ENCODE measurements at regions of chr10 and their contacts with region 1.

Region 1: GRCh38 chr10:133013463-133013862 is 71.1 kb upstream of the CFAP46 start:
- DNase-seq: no peak
- H3K4me3 ChIP-seq: no peak overlapping the region
- H3K27ac ChIP-seq: no peak overlapping the region
- H3K4me1 ChIP-seq: no peaks in the 10 kb centered on the region
- H3K27me3 ChIP-seq: peaks cover 0 to 8% of the 10 kb centered on the region in 2 donors
- CTCF ChIP-seq: no peak
- POLR2A ChIP-seq: no peak

Region 2: DNA sequence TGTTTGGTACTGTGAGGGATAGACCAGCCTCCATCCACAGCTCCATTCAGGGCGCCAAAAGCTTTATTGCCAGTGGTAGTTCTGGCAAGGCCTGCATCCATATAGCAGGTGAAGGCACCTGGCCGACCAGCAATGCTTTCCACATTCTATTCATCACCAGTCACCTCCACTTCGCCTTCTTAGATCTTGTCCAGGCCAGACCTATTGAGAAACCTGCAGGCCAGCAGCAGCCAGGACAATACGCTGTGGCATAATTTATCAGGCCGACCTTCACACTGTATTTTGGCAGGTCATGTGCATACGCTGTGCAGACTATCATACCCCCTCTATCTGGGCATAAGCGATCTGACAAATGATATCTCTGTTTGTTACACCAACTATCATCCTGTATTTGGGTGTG is 131.3 kb after region 1 on chr10:
- intact Hi-C with region 1: loop called (anchors 2 kb)
- DNase-seq: peak in 1 of 2 donors; percentile 20
- H3K4me3 ChIP-seq: no peak overlapping the region
- H3K27ac ChIP-seq: no peak overlapping the region
- H3K4me1 ChIP-seq: no peaks in the 10 kb centered on the region
- H3K27me3 ChIP-seq: peaks cover 4 to 34% of the 10 kb centered on the region in 2 donors
- CTCF ChIP-seq: no peak
- POLR2A ChIP-seq: no peak